Right cardiac atrium (tissue), 5 donors: ENCODE measurements at regions of chr16 and their contacts with region 1.

Region 1: GRCh38 chr16:4882633-4883285 is 35.5 kb downstream of the UBN1 start:
- DNase-seq: no peak
- ATAC-seq: peak; percentile 53 to 66
- H3K4me3 ChIP-seq: no peak overlapping the region
- H3K27ac ChIP-seq: peak overlapping the region; percentile 7
- H3K4me1 ChIP-seq: no peaks in the 10 kb centered on the region
- H3K27me3 ChIP-seq: no peaks in the 10 kb centered on the region

Region 2: DNA sequence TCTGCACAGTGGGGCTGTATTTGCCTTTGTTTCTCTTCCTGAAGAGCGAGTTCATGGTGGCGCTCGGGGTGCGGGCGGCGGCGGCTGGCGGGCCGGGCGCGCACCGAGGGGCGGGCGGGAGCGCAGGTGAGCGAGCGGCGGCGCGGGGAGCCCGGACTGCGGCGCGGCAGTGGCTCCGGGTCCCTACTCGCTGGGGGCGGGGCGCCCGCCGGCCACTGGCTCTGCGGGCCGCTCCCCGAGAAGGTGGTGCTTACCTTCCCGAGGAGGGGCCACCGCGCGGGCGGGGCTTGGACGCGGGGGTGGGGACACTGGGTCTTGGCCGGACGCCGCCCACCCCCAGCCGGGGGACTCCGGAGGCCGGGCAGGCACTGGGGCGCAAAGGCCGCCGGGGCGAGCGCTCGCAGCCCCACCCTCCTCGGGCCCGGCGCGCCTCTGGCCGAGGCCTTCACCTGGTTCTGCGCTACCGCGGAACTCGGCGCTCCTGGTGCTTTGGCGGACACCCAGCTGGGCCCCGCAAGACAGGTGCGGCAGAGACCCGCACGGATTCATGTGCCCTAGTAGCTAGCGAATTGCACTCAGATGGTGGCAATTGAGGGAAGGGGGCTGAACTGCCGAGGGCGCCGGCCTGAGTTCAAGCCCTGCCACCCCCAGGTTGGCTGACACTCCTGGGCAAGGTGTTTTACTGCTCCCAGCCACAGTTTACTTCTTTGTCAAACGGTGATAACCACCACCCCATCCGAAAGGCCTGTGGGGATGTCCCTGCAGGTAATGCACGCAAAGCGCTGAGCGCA is 54.4 kb after region 1 on chr16 and contains the start of gene PPL:
- intact Hi-C with region 1: loop called in 1 of 4 experiments (anchors 10 kb)
- DNase-seq: peak; percentile 42 to 87 (median 83)
- ATAC-seq: peak; percentile 30 to 53
- H3K4me3 ChIP-seq: peak within 1 kb of the TSS; percentile 58
- H3K27ac ChIP-seq: no peak within 1 kb of the TSS
- H3K4me1 ChIP-seq: peaks cover 2% of the 10 kb centered on the region
- H3K27me3 ChIP-seq: no peaks in the 10 kb centered on the region
- total RNA-seq, gene PPL: 3.9 to 19.1 (median 8.4) TPM